Activated naive CD4-positive, alpha-beta T cell treated with anti-CD3 and anti-CD28 coated beads for 36 hours (primary cell): ENCODE measurements at regions of chr19 and their contacts with region 1.

Region 1: DNA sequence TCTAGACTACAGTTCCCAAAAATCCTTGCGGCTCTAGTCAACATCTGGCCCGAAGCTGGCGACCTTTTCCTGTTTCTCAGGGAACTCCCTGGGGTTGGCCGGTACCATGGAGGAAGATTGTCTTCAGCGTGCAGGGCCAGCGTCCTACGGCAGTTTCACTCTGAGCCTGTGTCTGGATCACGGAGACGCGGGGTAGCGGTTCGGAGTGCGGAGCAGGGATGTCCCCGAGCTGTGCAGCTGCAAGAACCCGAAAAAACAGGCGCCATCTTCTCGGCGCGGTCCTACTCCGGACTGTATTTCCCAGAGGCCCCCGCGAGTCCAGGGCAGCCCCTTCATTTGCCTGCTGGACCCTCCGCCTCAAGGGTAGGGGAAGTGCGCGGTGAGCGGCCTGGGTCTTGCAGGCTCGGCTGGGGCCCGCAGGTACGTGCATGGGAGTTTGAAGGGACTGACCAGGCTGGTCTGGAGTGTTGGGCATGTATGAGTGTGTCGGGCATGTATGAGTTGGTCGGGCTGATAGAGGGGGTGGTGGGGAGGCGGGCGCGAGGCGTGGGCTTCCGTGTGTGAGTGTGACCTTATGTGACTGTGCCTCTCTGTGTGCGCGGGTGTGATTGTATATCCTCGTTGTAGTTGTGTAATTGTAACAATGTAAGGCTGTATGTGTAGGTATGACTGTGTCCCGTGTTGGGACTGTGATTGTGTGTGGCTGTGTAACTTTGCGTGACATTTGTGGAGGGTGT is at the start of gene ZNF383:
- DNase-seq: peak; percentile 87
- H3K4me3 Mint-ChIP-seq: peak within 1 kb of the TSS; percentile 88
- H3K27ac Mint-ChIP-seq: peak within 1 kb of the TSS; percentile 92
- H3K4me1 Mint-ChIP-seq: peaks cover 16% of the 10 kb centered on the region
- H3K27me3 Mint-ChIP-seq: no peaks in the 10 kb centered on the region
- total RNA-seq, gene ZNF383: 8.4 to 9.1 TPM

Region 2: DNA sequence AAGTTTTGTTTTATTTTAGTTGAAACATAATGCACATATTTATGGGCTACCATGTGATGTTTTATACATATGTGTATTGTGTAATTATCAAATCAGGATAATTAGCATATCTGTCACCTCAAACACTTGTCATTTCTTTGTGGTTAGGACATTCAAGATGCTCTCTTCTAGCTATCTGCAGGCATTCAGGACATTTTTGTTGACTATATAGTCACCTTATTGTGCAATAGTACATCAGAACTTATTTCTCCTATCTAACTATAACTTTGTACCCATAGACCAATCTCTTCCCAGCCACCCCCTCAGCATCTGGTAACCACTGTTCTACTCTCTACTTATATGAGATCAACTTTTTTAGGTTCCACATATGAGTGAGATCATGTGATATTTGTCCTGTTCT is 119.5 kb before region 1 on chr19:
- CTCF ChIA-PET with region 1: no interaction called
- intact Hi-C with region 1: no loop called
- DNase-seq: no peak
- H3K4me3 Mint-ChIP-seq: no peak overlapping the region
- H3K27ac Mint-ChIP-seq: no peak overlapping the region
- H3K4me1 Mint-ChIP-seq: no peaks in the 10 kb centered on the region
- H3K27me3 Mint-ChIP-seq: no peaks in the 10 kb centered on the region

Region 3: DNA sequence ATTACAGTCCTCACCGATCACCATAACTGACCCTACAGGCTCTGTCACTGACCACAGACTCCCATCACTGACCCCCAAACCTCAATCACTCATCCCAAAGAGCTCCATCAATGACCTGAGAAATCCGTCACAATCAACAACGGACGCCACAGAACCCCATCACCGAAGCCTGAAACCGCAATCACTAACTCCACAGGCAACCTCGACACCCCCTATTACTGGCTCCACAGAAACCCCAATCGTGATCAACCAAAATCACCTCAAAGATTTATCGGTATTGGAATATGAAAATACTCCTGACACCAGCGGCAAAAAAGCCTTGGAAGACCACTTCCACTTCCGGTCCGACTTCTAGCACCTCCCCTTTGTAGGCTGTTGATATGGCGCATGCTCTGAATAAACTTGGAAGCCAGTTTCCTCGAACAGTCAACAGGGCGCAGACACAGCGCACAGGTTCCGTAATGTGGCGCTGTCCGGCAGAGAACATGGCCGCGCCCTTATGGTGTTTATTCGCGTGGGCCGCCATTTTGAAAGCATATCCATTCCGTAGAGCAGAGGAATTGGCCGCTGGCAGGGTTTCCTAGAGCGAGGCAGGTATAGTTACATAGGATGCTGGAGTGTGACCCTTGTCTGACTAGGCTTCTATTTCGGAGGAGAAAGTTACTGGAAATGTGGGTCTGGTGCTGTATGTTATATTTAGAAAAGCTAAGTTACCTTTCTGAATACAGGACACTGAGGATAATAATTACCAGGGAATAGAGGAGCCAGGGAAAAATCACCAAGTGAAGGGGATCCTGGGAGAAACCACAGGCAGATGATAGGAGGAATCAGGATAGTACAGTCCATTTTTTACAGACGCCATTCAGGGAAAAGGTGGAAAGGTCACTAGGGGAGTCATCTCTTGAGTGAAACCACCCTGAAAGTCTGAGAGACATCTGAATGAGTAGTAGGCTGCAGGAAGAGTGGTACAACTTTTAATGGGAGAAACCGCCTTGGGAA is 45.4 kb before region 1 on chr19 and contains the start of gene ZNF585A:
- CTCF ChIA-PET with region 1: no interaction called
- intact Hi-C with region 1: loop called (anchors 1 kb)
- DNase-seq: peak; percentile 92
- H3K4me3 Mint-ChIP-seq: no peak within 1 kb of the TSS
- H3K27ac Mint-ChIP-seq: no peak within 1 kb of the TSS
- H3K4me1 Mint-ChIP-seq: no peaks in the 10 kb centered on the region
- H3K27me3 Mint-ChIP-seq: no peaks in the 10 kb centered on the region
- total RNA-seq, gene ZNF585A: 8.9 to 9.1 TPM